A549 (cell line): ENCODE measurements at regions of chr11 and their contacts with region 1.

Region 1: GRCh38 chr11:66976048-66976467 is 954 bp downstream of the C11orf86 start:
- DNase-seq: peak in 1 of 2 experiments; percentile 53
- ATAC-seq: peak; percentile 33 to 44; a peak in 5 of 6 replicates
- H3K4me3 ChIP-seq: no peak overlapping the region
- H3K27ac ChIP-seq: peak overlapping the region; percentile 95 to 99
- H3K4me1 ChIP-seq: peaks cover 61% of the 10 kb centered on the region
- CTCF ChIP-seq: peak; percentile 79
- EP300 ChIP-seq: no peak
- POLR2A ChIP-seq: no peak
- RAD21 ChIP-seq: peak; percentile 84 to 88

Region 2: GRCh38 chr11:66815646-66816045 is 160.4 kb before region 1 on chr11:
- CTCF ChIA-PET with region 1: no interaction called
- POLR2A ChIA-PET with region 1: no interaction called
- DNase-seq: no peak
- ATAC-seq: no peak
- H3K4me3 ChIP-seq: no peak overlapping the region
- H3K27ac ChIP-seq: no peak overlapping the region
- H3K4me1 ChIP-seq: no peaks in the 10 kb centered on the region
- CTCF ChIP-seq: no peak
- EP300 ChIP-seq: no peak
- POLR2A ChIP-seq: no peak
- RAD21 ChIP-seq: no peak

Region 3: DNA sequence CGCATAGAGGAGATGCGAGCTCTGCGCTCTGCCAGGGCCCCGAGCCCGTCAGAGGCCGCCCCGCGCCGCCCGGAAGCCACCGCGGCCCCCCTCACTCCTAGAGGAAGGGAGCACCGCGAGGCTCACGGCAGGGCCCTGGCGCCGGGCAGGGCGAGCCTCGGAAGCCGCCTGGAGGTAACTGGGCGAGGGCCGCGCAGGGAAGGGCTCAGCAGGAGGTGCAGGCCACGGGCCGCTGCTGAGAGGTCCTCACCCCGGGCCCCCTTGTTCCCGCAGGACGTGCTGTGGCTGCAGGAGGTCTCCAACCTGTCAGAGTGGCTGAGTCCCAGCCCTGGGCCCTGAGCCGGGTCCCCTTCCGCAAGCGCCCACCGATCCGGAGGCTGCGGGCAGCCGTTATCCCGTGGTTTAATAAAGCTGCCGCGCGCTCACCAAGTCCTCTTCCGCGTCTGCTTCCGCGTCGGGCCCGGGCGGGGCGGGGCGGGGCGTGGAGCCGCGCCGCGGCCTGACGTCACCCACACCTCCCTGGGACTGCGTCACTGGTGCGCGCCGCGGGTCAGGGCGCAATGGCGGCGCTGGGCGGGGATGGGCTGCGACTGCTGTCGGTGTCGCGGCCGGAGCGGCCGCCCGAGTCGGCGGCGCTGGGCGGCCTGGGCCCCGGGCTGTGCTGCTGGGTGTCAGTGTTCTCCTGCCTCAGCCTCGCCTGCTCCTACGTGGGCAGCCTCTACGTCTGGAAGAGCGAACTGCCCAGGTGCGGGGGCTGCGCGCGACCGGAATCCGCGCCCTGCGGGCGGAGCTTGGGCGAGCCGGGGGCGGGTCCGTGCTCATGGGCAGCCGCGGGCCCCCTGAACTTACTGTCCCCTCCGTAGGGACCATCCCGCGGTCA is 132.9 kb before region 1 on chr11 and contains the start of gene RCE1:
- CTCF ChIA-PET with region 1: interaction called, 27 read pairs
- POLR2A ChIA-PET with region 1: interaction called, 7 read pairs
- DNase-seq: peak; percentile 78 to 93
- ATAC-seq: peak; percentile 74 to 79
- H3K4me3 ChIP-seq: peak within 1 kb of the TSS; percentile 95
- H3K27ac ChIP-seq: peak within 1 kb of the TSS; percentile 98 to 99
- H3K4me1 ChIP-seq: peaks cover 45% of the 10 kb centered on the region
- CTCF ChIP-seq: no peak
- EP300 ChIP-seq: no peak
- POLR2A ChIP-seq: peak; percentile 81
- RAD21 ChIP-seq: peak in 1 of 2 experiments; percentile 31; a peak in 2 of 5 replicates
- polyA plus RNA-seq, gene RCE1: 20.3 and 22.1 TPM in 2 replicates

Region 4: GRCh38 chr11:66868726-66869566 is 107.1 kb before region 1 on chr11:
- CTCF ChIA-PET with region 1: interaction called, 18 read pairs
- POLR2A ChIA-PET with region 1: no interaction called
- DNase-seq: peak; percentile 86 to 89
- ATAC-seq: peak; percentile 75 to 92
- H3K4me3 ChIP-seq: no peak overlapping the region
- H3K27ac ChIP-seq: peak overlapping the region; percentile 31 to 76; a peak in 3 of 6 replicates
- H3K4me1 ChIP-seq: peaks cover 6% of the 10 kb centered on the region
- CTCF ChIP-seq: peak; percentile 45
- EP300 ChIP-seq: no peak
- POLR2A ChIP-seq: no peak
- RAD21 ChIP-seq: peak; percentile 29 to 43; a peak in 4 of 5 replicates

Region 5: GRCh38 chr11:66891851-66892660 is 84.0 kb before region 1 on chr11:
- CTCF ChIA-PET with region 1: interaction called, 18 read pairs
- POLR2A ChIA-PET with region 1: interaction called, 3 read pairs
- DNase-seq: peak; percentile 97 to 98
- ATAC-seq: peak; percentile 94 to 98
- H3K4me3 ChIP-seq: peak overlapping the region; percentile 8; the same call in 1 of the 3 replicates
- H3K27ac ChIP-seq: peak overlapping the region; percentile 95 to 97
- H3K4me1 ChIP-seq: peaks cover 65% of the 10 kb centered on the region
- CTCF ChIP-seq: no peak; the same call in 2 of the 3 replicates
- EP300 ChIP-seq: peak in 1 of 2 experiments; percentile 43; a peak in 1 of 5 replicates
- POLR2A ChIP-seq: no peak
- RAD21 ChIP-seq: peak; percentile 14 to 41; a peak in 3 of 5 replicates

Region 6: DNA sequence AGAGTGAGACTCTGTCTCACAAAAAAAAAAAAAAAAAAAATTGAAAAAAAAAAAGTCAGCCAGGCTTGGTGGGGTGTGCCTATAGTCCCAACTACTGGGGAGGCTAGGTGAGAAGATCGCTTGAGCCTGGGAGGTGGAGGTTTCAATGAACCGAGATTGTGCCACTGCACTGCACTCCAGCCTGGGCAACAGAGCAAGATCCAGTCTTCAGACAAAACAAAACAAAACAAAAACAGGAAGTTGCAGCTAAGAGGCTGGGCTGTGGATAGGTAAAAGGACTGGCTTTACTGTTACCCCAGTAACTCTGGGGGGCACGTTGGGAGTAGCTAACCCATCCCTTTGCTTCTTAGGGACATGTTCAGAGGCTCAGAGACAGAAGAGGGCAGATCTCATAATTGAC is 11.6 kb before region 1 on chr11:
- CTCF ChIA-PET with region 1: interaction called, 15 read pairs
- POLR2A ChIA-PET with region 1: no interaction called
- DNase-seq: no peak
- ATAC-seq: no peak
- H3K4me3 ChIP-seq: no peak overlapping the region
- H3K27ac ChIP-seq: peak overlapping the region; percentile 64 to 95
- H3K4me1 ChIP-seq: peaks cover 43% of the 10 kb centered on the region
- CTCF ChIP-seq: no peak
- EP300 ChIP-seq: no peak
- POLR2A ChIP-seq: no peak
- RAD21 ChIP-seq: no peak

Region 7: DNA sequence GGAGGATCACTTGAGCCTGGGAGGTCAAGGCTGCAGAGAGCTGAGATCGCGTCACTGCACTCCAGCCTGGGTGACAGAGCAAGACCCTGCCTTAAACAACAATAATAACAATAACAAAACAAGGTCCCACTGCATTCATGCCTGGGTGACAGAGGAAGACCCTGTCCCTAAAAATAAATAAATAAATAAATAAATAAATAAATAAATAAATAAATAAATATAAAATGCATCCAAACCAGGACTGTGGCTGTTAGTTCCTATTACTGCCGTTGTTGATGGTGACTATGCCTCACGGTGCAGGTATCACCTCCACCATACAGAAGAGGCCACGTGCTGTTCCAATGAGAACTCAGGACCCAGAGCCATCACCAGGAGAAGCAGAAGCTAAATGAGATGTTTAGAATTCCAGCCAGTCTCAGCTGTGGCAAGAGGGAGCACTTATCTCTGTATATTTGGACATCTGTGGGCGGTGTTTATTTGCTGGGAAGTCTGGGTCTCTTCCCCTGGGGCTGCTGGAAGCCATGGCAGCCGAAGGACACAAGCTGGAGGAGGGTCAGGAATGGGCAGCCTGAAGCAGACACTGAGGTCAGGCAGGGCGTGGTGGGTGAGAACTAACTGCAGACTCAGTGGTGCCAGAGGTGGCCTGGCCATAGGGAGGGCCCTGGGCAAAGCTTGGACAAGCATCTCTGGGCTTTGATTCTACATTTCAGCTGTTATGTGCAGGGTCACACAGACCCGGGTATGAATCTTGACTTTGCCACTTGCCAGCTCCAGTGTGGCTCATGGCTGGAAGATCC is 20.7 kb after region 1 on chr11:
- CTCF ChIA-PET with region 1: interaction called, 11 read pairs
- POLR2A ChIA-PET with region 1: no interaction called
- DNase-seq: peak in 1 of 2 experiments; percentile 79
- ATAC-seq: peak; percentile 76 to 91
- H3K4me3 ChIP-seq: no peak overlapping the region
- H3K27ac ChIP-seq: peak overlapping the region; percentile 54 to 71
- H3K4me1 ChIP-seq: peaks cover 16% of the 10 kb centered on the region
- CTCF ChIP-seq: no peak
- EP300 ChIP-seq: peak in 1 of 2 experiments; percentile 39; a peak in 1 of 5 replicates
- POLR2A ChIP-seq: no peak
- RAD21 ChIP-seq: no peak

Region 8: DNA sequence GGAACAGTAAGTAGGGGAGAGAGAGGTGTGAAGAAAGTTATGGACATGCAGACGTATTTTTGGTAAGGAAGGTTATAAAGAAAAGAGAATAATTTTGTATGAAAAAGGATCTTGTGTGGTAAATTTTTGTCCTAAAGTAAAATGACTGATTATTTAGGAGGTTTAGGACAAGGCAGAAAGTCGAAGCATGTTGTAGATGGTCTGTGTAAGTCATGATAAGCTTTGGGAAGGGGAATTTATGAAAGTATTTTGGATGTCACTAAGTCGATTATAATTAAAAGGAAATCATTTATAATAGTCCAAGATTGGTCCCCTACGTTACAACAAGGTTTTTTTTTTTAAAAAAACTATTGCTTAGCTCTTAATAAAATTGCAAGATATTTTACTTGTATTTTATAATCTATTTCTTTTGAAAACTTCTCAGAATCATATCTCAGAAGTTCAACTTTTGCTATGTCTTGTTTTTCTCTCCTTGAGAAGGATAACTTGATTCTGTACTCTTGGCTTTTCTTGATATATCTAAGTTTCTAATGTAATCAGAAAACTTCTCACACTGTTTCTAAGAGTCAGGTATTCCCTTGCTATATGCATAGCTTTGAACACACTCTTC is 558.1 kb after region 1 on chr11:
- CTCF ChIA-PET with region 1: no interaction called
- POLR2A ChIA-PET with region 1: no interaction called
- DNase-seq: peak in 1 of 2 experiments; percentile 52
- ATAC-seq: no peak
- H3K4me3 ChIP-seq: no peak overlapping the region
- H3K27ac ChIP-seq: no peak overlapping the region
- H3K4me1 ChIP-seq: no peaks in the 10 kb centered on the region
- CTCF ChIP-seq: no peak
- EP300 ChIP-seq: no peak
- POLR2A ChIP-seq: no peak
- RAD21 ChIP-seq: no peak